WTC11 (cell line): ENCODE measurements at regions of chr16 and their contacts with region 1.

Region 1: DNA sequence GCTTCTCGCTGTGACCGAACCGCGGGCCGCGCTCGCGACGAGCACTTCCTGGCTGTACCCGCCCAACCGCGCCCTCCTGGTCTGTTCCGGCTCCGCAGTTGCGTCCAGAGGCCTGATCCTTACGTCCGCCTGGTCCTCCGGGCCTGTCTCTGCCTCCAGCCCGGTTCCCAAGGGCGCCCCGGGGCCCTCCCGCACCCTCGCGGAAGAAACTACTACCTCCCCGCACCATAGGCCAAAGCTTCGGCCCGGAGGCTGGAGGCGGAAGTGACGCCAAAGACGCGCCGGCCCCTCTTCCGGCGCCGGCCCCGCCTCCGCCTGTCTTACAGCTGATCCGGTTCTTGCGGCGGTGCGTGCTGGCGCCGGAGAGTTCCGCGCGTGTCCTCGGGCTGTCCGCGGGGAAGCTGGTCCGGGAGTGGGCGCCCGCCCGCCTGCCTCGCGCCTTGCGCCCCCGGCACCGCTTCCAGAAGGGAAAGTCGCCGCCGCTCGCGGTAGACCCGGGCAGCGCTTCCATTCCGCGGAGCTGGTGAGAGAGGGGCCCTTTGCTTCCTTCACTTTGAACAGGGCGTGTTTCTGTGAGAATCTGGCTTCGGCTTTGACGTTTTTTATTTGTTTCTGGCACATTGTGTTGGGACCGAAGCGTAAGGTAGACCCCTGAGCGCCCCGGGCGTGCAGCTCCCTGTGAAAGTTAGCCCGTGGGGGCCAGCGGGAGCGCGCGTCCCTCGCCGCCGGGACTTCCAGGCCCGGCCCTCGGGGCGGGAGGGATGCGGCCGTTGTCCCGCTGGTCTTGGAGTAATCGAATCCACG is at the start of gene ZNF778:
- DNase-seq: peak; percentile 71
- ATAC-seq: peak; percentile 78
- H3K4me3 Mint-ChIP-seq: peak within 1 kb of the TSS; percentile 87
- H3K27ac Mint-ChIP-seq: peak within 1 kb of the TSS; percentile 91
- H3K4me1 Mint-ChIP-seq: peaks cover 11% of the 10 kb centered on the region
- H3K27me3 Mint-ChIP-seq: no peaks in the 10 kb centered on the region
- CTCF ChIP-seq: no peak
- total RNA-seq, gene ZNF778: 15.5 to 31.2 TPM (median 15.6 TPM) in 3 replicates

Region 2: GRCh38 chr16:89193021-89193575 is 24.5 kb before region 1 on chr16:
- CTCF ChIA-PET with region 1: interaction called, 10 read pairs
- POLR2A ChIA-PET with region 1: no interaction called
- DNase-seq: peak; percentile 90
- ATAC-seq: peak; percentile 78
- H3K4me3 Mint-ChIP-seq: no peak overlapping the region
- H3K27ac Mint-ChIP-seq: no peak overlapping the region
- H3K4me1 Mint-ChIP-seq: no peaks in the 10 kb centered on the region
- H3K27me3 Mint-ChIP-seq: peaks cover 3% of the 10 kb centered on the region
- CTCF ChIP-seq: no peak

Region 3: GRCh38 chr16:89241187-89242007 is 23.8 kb after region 1 on chr16:
- CTCF ChIA-PET with region 1: interaction called, 11 read pairs
- POLR2A ChIA-PET with region 1: no interaction called
- DNase-seq: peak; percentile 70
- ATAC-seq: peak; percentile 81
- H3K4me3 Mint-ChIP-seq: peak overlapping the region; percentile 98
- H3K27ac Mint-ChIP-seq: peak overlapping the region; percentile 98
- H3K4me1 Mint-ChIP-seq: peaks cover 2% of the 10 kb centered on the region; the same call in 1 of the 2 replicates
- H3K27me3 Mint-ChIP-seq: peaks cover 13% of the 10 kb centered on the region
- CTCF ChIP-seq: no peak